AG04449 (cell line): ENCODE measurements at regions of chr6 and their contacts with region 1.

Region 1: DNA sequence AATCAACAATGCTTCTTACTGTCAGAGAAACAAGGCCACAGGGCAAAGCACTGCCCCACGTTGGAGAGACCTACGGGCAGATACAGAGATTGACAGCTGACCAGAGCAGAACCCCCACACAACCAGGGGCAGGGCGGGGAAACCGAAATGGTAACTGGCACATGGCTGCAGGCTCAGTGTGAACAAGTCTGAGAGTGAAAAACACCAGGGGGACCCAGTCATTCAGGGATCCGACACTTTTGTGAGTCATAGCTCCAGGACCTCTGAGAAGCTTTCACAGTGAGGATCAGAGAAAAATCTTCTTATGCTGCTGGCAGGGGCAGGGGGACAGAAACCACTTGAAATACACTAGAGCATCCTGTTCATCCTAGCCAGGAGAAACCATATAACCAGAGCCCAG is 254.2 kb downstream of the C6orf118 start:
- DNase-seq: no peak
- H3K4me3 ChIP-seq: no peak overlapping the region
- CTCF ChIP-seq: no peak

Region 2: DNA sequence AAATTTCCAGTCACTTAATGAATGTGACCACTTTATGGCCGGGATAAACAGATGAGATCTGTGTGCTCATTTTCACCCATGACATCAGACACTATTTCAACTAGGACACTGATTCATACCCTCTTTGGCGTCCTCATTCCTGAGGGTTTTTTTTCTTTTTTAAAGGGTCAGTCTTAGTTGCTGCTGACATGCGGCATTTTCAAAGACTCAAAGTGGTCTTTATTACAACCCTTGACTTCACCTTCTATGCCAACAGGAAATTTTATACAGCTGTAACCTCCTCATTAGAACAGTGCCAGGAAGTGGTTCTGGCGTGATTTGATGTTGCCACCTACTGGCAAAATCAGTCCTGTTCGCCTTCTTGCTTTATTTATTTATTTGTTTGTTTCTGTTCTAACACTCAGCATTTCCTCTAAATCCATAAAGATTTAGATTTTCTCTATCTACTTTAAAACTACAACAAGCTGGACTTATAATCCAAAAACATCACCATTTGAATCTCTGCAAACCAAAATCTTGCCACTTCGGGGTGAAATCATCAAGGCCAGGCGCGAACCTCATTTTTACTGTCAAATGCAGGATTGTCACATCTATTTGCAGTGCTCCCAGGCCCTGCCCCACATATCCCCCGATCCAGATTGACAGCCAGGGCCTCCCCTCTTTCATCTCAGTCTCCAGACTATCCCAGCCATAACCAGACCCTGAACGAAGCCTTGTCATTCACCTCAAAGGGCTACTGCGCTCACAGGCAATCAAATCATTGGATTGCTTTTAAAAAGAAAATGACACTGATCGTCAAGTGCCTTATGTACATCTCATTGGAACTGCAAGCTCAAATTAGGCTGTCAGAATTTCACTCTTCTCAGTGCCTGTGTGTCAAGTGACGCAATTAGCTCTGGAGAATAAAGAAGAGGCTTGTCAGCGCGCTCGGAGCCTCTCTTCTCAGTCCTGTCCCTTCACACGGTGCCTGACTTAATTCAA is 176.6 kb after region 1 on chr6:
- CTCF ChIA-PET with region 1: interaction called, 45 read pairs
- POLR2A ChIA-PET with region 1: no interaction called
- DNase-seq: no peak
- H3K4me3 ChIP-seq: no peak overlapping the region
- CTCF ChIP-seq: peak; percentile 32